AG04449 (cell line): ENCODE measurements at regions of chr22 and their contacts with region 1.

Region 1: GRCh38 chr22:31561238-31561887 is 65.0 kb downstream of the SFI1 start:
- DNase-seq: no peak
- H3K4me3 ChIP-seq: no peak overlapping the region
- CTCF ChIP-seq: peak; percentile 98

Region 2: DNA sequence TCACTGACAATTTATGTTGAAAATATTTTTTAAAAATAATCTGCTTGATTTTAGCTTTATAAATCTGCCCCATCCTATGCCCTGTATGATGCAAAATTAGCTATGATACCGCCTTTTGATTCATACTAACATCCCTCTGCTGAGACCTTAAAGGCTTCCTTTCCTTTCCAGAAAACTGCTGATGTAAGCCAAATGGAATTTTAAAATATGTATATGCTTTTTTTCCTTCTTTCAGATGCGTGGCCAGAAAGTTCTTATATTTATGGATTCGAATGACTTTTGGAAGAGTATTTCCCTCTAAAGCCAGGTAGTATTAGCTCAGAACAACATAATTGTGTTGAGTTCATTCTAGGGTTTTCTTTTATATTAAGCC is 30.6 kb before region 1 on chr22:
- CTCF ChIA-PET with region 1: interaction called, 30 read pairs
- POLR2A ChIA-PET with region 1: no interaction called
- DNase-seq: peak; percentile 10
- H3K4me3 ChIP-seq: no peak overlapping the region
- CTCF ChIP-seq: no peak

Region 3: DNA sequence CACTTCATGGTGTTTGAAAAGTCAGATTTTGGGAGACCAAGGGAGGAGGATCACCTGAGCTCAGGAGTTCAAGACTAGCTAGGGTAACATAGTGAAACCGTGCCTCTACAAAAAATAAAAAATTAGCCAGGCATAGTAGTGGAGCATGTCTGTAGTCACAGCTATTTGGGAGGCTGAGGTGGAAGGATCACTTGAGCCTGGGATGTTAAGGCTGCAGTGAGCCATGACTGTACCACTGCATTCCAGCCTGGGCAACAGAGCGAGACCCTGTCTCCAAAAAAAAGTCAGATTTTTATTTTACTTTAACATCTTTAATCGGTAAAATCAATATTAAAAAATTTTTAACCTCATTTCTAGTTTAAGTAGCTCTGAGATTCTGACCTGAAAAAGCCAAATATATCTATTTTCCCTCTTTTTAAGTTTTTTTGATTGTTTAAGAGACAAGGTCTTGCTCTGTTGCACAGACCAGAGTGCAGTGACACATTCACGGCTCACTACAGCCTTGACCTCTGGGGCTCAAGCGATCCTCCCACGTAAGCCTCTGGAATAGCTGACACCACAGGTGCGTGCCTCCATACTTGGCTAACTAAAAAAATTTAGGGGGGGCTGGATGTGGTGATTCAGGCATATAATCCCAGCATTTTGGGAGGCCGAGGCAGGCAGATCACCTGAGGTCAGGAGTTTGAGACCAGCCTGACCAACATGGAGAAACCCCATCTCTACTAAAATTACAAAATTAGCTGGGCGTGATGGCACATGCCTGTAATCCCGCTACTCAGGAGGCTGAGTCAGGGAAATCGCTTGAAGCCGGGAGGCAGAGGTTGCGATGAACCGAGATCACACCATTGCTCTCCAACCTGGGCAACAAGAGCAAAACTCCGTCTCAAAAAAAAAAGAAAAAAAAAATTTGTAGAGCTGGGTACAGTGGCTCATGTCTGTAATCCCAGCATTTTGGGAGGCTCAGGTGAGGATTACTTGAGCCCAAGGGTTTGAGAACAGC is 16.6 kb before region 1 on chr22:
- CTCF ChIA-PET with region 1: interaction called, 46 read pairs
- POLR2A ChIA-PET with region 1: no interaction called
- DNase-seq: no peak
- H3K4me3 ChIP-seq: no peak overlapping the region
- CTCF ChIP-seq: no peak

Region 4: GRCh38 chr22:31575190-31575589 is 13.8 kb after region 1 on chr22:
- CTCF ChIA-PET with region 1: interaction called, 31 read pairs
- POLR2A ChIA-PET with region 1: no interaction called
- DNase-seq: no peak
- H3K4me3 ChIP-seq: no peak overlapping the region
- CTCF ChIP-seq: no peak

Region 5: DNA sequence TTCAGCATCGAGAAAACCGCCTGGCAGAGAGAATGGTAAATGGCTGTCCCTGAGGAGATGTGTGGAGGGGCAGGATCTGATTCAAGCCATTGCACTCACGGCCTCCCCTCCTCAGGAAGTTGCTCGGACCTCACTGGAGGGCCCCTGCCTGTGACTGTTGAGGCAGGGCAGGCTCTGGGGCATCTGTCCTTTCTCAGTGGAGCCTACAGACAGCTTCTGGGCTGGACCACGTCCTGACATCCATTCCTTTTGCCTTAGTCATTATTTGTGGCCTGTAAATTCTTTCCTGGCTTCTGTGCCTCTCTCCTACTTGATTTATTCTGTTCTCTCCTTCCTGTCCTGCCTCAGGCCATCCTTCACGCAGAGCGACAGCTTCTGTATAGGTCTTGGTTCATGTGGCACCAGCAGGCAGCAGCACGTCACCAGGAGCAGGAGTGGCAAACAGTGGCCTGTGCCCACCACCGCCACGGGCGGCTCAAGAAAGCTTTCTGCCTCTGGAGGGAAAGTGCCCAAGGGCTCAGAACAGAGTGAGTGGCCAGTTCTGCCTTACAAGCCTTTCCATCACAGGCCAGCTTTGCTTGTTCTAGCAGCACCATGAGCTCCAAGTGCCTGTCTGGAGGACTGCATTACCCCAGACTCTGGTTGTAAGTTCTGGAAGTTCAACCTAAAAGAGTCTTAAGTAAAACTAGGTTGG is 41.0 kb after region 1 on chr22:
- CTCF ChIA-PET with region 1: interaction called, 12 read pairs
- POLR2A ChIA-PET with region 1: no interaction called
- DNase-seq: peak; percentile 78
- H3K4me3 ChIP-seq: no peak overlapping the region
- CTCF ChIP-seq: no peak

Region 6: DNA sequence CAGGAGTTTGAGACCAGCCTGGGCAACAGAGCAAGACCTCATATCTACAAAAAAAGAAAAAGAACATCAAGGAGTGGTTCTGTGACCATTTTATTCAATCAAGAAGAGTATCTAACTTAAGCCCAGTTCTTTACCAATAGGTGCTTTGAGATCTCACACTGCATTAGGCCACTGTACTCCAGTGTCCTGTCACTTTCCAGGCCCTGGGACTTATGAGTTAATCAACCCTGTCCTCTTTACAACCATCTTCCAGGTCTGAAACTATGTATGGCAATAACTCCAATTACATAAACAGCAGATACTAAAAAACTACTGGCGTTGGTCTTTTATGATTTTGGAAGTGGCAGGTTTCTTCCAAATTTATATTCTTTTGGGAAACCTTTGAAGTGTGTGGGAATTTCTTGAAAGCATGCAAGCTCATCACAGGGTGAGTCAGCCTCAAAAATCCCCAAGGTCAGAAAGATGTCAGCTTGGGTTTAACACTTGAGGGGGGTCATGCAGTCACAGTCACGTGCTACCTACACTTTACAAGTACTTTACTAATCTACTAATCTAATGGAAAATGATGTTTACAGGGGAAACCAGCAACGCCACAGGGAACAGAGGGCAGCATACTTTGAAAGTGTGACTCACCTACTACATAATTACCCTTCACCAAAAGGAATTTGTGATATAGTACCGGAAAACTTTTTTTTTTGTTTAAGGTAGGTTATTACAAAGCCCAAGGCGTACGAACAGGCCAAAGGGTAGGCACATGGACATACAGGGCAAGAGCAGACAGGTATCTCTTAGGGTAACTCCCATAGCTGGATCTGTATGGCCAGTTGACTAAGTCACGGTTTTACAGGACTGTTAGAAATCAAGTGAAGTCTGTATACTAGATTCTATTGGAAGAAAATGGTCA is 85.1 kb after region 1 on chr22:
- CTCF ChIA-PET with region 1: interaction called, 12 read pairs
- POLR2A ChIA-PET with region 1: no interaction called
- DNase-seq: peak; percentile 96
- H3K4me3 ChIP-seq: no peak overlapping the region
- CTCF ChIP-seq: no peak

Region 7: GRCh38 chr22:31676700-31677099 is 115.3 kb after region 1 on chr22:
- CTCF ChIA-PET with region 1: interaction called, 13 read pairs
- POLR2A ChIA-PET with region 1: no interaction called
- DNase-seq: no peak
- H3K4me3 ChIP-seq: peak overlapping the region; percentile 49
- CTCF ChIP-seq: no peak

Region 8: GRCh38 chr22:31776231-31776630 is 214.9 kb after region 1 on chr22:
- CTCF ChIA-PET with region 1: no interaction called
- POLR2A ChIA-PET with region 1: no interaction called
- DNase-seq: no peak
- H3K4me3 ChIP-seq: no peak overlapping the region
- CTCF ChIP-seq: no peak